ENCODE measurements at regions of chr5 and their contacts with region 1.

Region 1: DNA sequence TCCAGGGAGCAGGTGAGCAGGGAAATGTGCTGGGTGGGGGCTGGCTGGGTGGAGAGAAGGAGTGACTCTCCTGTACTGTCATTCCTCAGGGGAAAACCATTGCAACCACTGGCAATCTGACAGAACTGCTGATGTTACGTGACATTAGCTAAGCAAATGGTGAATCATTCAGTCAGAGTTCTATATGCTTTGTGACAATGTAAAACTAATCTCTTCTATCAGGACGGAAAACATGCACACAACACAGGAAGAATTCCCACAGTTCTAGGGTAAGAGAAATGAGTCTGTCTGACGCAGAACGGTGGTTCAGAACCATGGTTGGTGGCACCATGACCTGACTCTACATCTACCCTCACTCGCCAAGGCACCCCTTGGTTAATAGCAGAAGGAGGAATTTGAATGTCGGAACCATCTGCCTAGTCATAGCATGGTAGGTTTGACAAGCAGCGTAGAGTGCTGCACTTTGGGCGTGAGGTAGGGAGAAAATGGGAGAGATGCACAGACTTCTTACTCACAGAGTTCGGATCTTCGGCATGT is 243.6 kb upstream of the PANK3 start:
- DNase-seq: peak; percentile 71
- ATAC-seq: peak; percentile 88
- H3K4me3 Mint-ChIP-seq: peak overlapping the region; percentile 58
- H3K27ac Mint-ChIP-seq: peak overlapping the region; percentile 94
- H3K4me1 Mint-ChIP-seq: peaks cover 36% of the 10 kb centered on the region
- H3K27me3 Mint-ChIP-seq: peaks cover 6% of the 10 kb centered on the region

Region 2: GRCh38 chr5:168793841-168794837 is 28.7 kb before region 1 on chr5:
- CTCF ChIA-PET with region 1: interaction called, 5 read pairs
- POLR2A ChIA-PET with region 1: no interaction called
- intact Hi-C with region 1: loop called in 1 of 2 experiments (anchors 1 kb)
- DNase-seq: peak; percentile 81
- ATAC-seq: peak; percentile 77
- H3K4me3 Mint-ChIP-seq: no peak overlapping the region
- H3K27ac Mint-ChIP-seq: peak overlapping the region; percentile 90
- H3K4me1 Mint-ChIP-seq: peaks cover 58% of the 10 kb centered on the region
- H3K27me3 Mint-ChIP-seq: no peaks in the 10 kb centered on the region

Region 3: DNA sequence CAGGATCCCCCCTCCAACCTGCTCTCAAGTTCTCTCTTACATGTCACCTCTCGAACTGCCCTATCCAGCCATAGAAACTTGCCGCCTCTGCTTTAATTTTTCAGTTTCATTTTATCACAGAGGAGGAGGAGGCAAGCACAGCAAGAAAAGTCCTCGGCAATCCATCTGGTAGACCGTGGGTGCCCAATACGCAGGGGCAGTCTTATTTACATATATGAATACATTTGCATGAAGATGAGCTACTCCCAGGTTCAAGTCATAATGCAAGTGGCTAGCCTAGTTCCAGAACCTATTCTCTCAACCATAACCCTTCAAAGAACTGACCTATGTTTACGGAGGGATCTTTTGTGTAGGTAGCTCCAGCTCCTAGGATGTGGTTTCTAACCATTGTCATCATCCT is 20.5 kb before region 1 on chr5:
- CTCF ChIA-PET with region 1: interaction called, 5 read pairs
- POLR2A ChIA-PET with region 1: no interaction called
- intact Hi-C with region 1: loop called (anchors 1 kb)
- DNase-seq: peak; percentile 68
- ATAC-seq: peak; percentile 60
- H3K4me3 Mint-ChIP-seq: peak overlapping the region; percentile 52
- H3K27ac Mint-ChIP-seq: peak overlapping the region; percentile 91
- H3K4me1 Mint-ChIP-seq: peaks cover 49% of the 10 kb centered on the region
- H3K27me3 Mint-ChIP-seq: peaks cover 13% of the 10 kb centered on the region

Region 4: DNA sequence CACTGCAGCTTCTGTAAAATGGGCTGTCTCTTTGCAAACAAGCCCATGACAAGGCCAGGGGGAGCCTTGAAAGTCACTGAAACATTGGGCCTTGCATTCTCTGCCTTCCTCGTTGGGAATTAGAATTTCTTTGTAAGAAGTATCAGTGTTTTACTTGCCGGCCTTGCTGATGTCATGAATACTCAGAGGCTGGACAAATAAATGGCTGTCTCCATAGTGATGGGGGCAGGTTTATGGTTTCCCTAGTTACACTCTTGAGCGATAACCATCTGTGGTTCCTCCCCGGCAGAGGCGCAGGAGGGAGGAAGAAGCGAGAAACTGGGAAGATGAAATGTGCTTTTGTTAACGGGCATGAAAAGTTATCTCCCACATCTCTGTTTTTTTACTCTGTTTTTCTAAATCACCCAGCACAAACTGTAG is 29.1 kb after region 1 on chr5:
- CTCF ChIA-PET with region 1: interaction called, 3 read pairs
- POLR2A ChIA-PET with region 1: no interaction called
- intact Hi-C with region 1: loop called in 1 of 2 experiments (anchors 1 kb)
- DNase-seq: peak; percentile 63
- ATAC-seq: peak; percentile 59
- H3K4me3 Mint-ChIP-seq: peak overlapping the region; percentile 59
- H3K27ac Mint-ChIP-seq: peak overlapping the region; percentile 84
- H3K4me1 Mint-ChIP-seq: peaks cover 43% of the 10 kb centered on the region
- H3K27me3 Mint-ChIP-seq: peaks cover 2% of the 10 kb centered on the region